ENCODE measurements at regions of chr13 and their contacts with region 1.

Region 1: GRCh38 chr13:26382366-26382765 is 128.4 kb downstream of the CDK8 start:
- DNase-seq: no peak
- ATAC-seq: no peak
- H3K4me3 ChIP-seq: no peak overlapping the region
- H3K27ac ChIP-seq: no peak overlapping the region
- H3K4me1 ChIP-seq: peaks cover 0 to 12% (median 2%) of the 10 kb centered on the region in 12 donors
- H3K27me3 ChIP-seq: no peaks in the 10 kb centered on the region
- CTCF ChIP-seq: no peak
- POLR2A ChIP-seq: no peak

Region 2: GRCh38 chr13:25097426-25097825 is 1284.9 kb before region 1 on chr13:
- intact Hi-C with region 1: no loop called
- DNase-seq: no peak
- ATAC-seq: no peak
- H3K4me3 ChIP-seq: no peak overlapping the region
- H3K27ac ChIP-seq: no peak overlapping the region
- H3K4me1 ChIP-seq: no peaks in the 10 kb centered on the region
- H3K27me3 ChIP-seq: peaks cover 0 to 37% (median 15%) of the 10 kb centered on the region in 9 donors
- CTCF ChIP-seq: no peak
- POLR2A ChIP-seq: no peak

Region 3: DNA sequence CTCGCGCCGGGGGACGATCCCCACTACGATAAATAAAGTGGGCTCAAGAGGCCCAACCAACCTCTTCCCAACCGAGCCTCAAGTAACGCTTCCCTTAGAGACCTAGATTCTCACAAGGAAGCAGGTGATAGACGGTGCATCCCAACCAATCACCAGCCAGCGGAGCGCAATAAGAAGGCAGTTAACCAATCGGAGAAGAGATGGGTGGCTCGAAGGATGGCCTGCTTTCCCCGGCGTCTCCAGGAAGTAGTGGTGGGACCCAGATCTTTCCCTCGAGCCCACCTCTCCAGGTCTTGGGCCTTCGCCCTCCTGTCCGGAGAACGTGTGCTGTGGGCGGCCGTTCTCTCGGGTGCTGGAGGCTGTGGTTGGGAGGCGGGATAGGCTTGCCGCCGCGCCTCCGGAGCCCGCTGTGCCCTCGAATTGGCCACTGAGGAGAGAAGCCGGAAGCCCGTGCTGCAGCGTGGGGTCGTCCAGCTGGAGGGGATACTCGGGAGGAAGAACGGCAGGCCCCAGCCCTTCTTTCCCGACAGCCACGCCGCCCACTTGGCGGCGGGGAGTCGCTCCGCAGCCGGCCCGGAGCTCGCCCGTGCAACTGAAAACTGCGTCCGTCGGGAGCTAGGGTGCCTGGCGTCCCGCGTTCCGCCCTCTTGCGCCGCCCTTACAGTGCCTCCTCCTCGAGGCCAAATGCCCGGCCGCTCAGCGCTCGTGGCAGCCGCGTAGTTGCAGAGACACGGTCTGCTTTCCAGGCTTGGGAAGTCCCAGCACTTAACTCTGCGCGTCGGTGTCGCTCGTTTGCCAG is 160.4 kb before region 1 on chr13 and contains the start of gene RNF6:
- intact Hi-C with region 1: loop called in 1 of 10 experiments (anchors 10 kb)
- DNase-seq: peak; percentile 91 to 96 (median 96)
- ATAC-seq: peak; percentile 98 to 99 (median 99)
- H3K4me3 ChIP-seq: peak within 1 kb of the TSS; percentile 70 to 99 (median 90)
- H3K27ac ChIP-seq: peak within 1 kb of the TSS; percentile 90 to 99 (median 96)
- H3K4me1 ChIP-seq: peaks cover 4 to 33% (median 21%) of the 10 kb centered on the region in 12 donors
- H3K27me3 ChIP-seq: no peaks in the 10 kb centered on the region
- CTCF ChIP-seq: no peak
- POLR2A ChIP-seq: peak in 1 of 2 donors; percentile 39
- total RNA-seq, gene RNF6: 13.9 to 38.2 (median 23.8) TPM

Measured in heart left ventricle (tissue), 16 donors.